ENCODE measurements at regions of chr12 and their contacts with region 1.

Region 1: DNA sequence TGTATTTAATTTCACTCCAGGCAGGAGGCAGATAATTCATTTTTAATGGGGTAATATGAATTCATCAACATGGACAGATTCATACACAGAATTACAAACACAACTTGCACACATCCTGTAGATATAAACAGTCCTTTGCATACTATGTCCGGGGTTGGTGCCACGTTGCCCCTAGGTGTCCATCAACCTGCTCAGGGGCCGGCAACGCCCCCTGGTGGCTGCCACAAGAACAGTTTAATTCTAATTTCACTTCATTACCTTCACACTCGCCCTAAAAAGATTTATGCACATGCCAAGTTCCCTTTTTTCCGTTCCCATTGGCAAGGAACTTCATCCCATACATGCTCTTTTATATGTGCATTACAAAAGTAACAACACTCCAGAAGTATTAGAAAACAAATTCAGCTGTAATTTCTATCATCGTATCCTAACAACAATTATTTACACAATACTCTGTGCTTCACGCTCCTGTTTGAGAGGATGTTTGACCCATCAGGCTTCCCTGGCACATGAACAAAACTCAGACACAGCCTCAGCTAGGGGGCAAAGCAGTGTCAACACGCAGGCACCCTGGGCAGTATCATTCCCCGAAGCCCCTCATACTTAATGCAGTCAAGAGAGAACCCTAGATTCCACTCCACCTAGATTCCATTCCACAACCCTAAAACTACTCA is 15.5 kb downstream of the MANSC1 start:
- DNase-seq: no peak
- ATAC-seq: peak; percentile 60

Region 2: GRCh38 chr12:12159988-12160387 is 174.5 kb before region 1 on chr12:
- intact Hi-C with region 1: loop called (anchors 10 kb)
- DNase-seq: no peak
- ATAC-seq: no peak

Region 3: DNA sequence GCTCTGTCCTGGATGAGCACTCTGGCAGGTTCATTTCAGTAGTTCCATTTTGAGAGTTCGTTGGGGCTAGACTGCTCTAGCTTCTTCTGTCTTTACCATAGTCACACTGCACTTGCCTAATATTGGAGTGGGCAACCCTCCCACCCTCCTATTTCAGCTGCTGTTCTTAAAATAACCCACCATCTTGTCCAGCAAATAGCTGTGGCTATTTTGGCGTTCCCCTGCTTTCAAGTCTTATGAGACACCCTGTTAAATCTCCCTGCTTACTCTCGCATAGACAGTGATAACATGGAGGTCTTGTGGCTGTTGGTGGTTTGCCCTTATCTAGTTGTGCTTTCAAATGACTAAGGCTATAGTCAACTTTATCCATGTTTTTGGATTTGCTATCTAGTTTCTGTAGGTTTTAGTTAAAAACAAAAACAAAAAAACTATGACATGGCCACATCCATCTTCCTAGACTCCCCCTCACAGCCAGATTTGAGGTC is 133.2 kb before region 1 on chr12:
- intact Hi-C with region 1: no loop called
- DNase-seq: no peak
- ATAC-seq: peak; percentile 71

Region 4: GRCh38 chr12:12398026-12398859 is 63.7 kb after region 1 on chr12:
- intact Hi-C with region 1: no loop called
- DNase-seq: peak; percentile 70
- ATAC-seq: peak; percentile 98